ENCODE measurements at regions of chr11 and their contacts with region 1.

Region 1: GRCh38 chr11:122832721-122833470 is 5.4 kb upstream of the CRTAM start:
- DNase-seq: no peak
- ATAC-seq: peak; percentile 33
- H3K4me3 Mint-ChIP-seq: no peak overlapping the region
- H3K27ac Mint-ChIP-seq: peak overlapping the region; percentile 44
- H3K4me1 Mint-ChIP-seq: peaks cover 24% of the 10 kb centered on the region
- H3K27me3 Mint-ChIP-seq: no peaks in the 10 kb centered on the region

Region 2: GRCh38 chr11:122808478-122808869 is 24.4 kb before region 1 on chr11:
- CTCF ChIA-PET with region 1: interaction called, 20 read pairs
- POLR2A ChIA-PET with region 1: interaction called, 4 read pairs
- DNase-seq: no peak
- ATAC-seq: no peak
- H3K4me3 Mint-ChIP-seq: no peak overlapping the region
- H3K27ac Mint-ChIP-seq: peak overlapping the region; percentile 58
- H3K4me1 Mint-ChIP-seq: peaks cover 64% of the 10 kb centered on the region
- H3K27me3 Mint-ChIP-seq: no peaks in the 10 kb centered on the region

Region 3: GRCh38 chr11:122814401-122814800 is 18.5 kb before region 1 on chr11:
- CTCF ChIA-PET with region 1: interaction called, 20 read pairs
- POLR2A ChIA-PET with region 1: no interaction called
- DNase-seq: peak; percentile 30
- ATAC-seq: no peak
- H3K4me3 Mint-ChIP-seq: no peak overlapping the region
- H3K27ac Mint-ChIP-seq: no peak overlapping the region
- H3K4me1 Mint-ChIP-seq: peaks cover 41% of the 10 kb centered on the region
- H3K27me3 Mint-ChIP-seq: no peaks in the 10 kb centered on the region

Region 4: DNA sequence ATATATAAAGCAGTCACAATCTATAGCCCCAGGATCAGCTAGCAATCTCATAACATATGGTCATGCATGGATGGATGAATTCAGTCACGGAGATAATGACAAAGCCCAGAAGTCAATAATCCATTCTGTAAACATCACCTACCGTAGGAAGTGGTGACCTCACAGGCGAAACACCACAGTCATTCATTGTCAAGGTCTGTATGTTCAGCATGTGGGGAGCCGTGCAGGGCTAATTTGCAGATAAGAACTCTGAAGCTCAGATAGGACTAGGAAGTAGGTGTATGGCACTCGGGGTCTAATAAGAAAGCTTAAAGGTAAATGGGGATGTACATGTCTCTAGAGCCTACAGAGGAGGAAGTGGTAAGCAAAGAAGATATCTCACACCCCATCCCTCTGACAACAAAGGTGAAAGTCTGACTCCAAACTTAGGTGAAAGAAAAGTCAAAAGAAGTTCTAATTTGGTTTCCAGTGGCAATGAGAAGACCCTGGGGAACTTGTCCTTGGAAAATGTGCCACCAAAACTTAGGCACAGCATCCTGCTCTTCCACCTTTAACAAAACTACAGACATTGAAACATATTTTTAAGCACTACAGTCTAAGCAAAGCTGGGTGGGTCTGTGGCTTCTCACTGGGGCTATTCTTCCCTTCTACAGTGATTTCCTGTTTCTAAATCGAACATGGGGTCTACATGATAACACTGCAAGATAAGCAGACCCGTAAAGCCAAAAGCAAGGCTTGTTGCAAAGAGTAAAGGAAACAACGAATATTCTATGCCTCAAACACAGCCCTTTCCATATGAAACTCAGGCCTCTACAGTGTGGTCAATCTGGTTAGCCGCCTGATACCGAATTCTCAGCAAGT is 10.6 kb after region 1 on chr11:
- CTCF ChIA-PET with region 1: interaction called, 194 read pairs
- POLR2A ChIA-PET with region 1: interaction called, 15 read pairs
- DNase-seq: peak; percentile 82
- ATAC-seq: peak; percentile 84
- H3K4me3 Mint-ChIP-seq: peak overlapping the region; percentile 67
- H3K27ac Mint-ChIP-seq: peak overlapping the region; percentile 94
- H3K4me1 Mint-ChIP-seq: peaks cover 80% of the 10 kb centered on the region
- H3K27me3 Mint-ChIP-seq: no peaks in the 10 kb centered on the region

Region 5: GRCh38 chr11:122951211-122951610 is 118.3 kb after region 1 on chr11:
- CTCF ChIA-PET with region 1: no interaction called
- POLR2A ChIA-PET with region 1: no interaction called
- DNase-seq: no peak
- ATAC-seq: no peak
- H3K4me3 Mint-ChIP-seq: no peak overlapping the region
- H3K27ac Mint-ChIP-seq: no peak overlapping the region
- H3K4me1 Mint-ChIP-seq: peaks cover 4% of the 10 kb centered on the region
- H3K27me3 Mint-ChIP-seq: no peaks in the 10 kb centered on the region

Region 6: DNA sequence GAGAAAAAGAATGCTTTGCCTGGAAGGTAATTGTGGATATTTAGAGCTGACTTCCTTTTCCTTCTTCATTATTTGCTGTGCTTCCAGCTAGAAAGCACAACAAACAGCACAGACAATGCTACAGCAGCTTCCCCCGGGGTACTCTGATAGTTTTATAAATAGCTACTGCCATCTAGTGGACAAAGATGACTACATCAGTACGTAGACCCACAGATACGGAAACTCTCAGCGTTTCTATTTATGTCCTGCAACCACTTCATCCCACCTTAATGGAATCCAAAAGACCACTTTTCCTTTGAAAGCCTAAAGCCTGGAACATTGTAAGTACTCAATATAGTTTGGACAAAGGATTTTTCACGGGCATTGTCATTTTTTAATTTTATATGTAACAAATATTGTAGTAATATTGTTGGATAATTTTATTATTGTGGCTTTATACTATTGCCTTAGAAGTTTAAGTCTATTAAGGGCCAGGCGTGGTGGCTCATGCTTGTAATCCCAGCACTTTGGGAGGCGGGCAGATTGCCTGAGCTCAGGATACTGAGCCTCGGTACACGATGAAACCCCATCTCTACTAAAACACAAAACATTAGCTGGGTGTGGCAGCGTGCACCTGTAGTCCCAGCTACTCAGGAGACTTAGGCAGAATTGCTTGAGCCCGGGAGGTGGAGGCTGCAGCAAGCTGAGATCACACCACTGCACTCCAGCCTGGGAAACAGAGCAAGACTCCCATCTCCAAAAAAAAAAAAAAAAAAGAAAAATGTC is 221.6 kb after region 1 on chr11:
- CTCF ChIA-PET with region 1: interaction called, 12 read pairs
- POLR2A ChIA-PET with region 1: no interaction called
- DNase-seq: peak; percentile 52
- ATAC-seq: peak; percentile 45
- H3K4me3 Mint-ChIP-seq: no peak overlapping the region
- H3K27ac Mint-ChIP-seq: peak overlapping the region; percentile 61
- H3K4me1 Mint-ChIP-seq: peaks cover 43% of the 10 kb centered on the region
- H3K27me3 Mint-ChIP-seq: no peaks in the 10 kb centered on the region

Measured in activated CD8-positive, alpha-beta T cell treated with anti-CD3 and anti-CD28 coated beads, Interleukin-2, amount 10 ng/mL, durations not matched to agents 7 days and 5 days (primary cell).